AG04449 (cell line): ENCODE measurements at regions of chrX and their contacts with region 1.

Region 1: GRCh38 chrX:24748202-24748843 is 54.6 kb downstream of the POLA1 start:
- DNase-seq: no peak
- H3K4me3 ChIP-seq: no peak overlapping the region
- CTCF ChIP-seq: no peak

Region 2: GRCh38 chrX:24647257-24648058 is 100.9 kb before region 1 on chrX and contains the start of gene PCYT1B:
- CTCF ChIA-PET with region 1: no interaction called
- POLR2A ChIA-PET with region 1: no interaction called
- DNase-seq: no peak
- H3K4me3 ChIP-seq: peak within 1 kb of the TSS; percentile 29
- CTCF ChIP-seq: no peak

Region 3: DNA sequence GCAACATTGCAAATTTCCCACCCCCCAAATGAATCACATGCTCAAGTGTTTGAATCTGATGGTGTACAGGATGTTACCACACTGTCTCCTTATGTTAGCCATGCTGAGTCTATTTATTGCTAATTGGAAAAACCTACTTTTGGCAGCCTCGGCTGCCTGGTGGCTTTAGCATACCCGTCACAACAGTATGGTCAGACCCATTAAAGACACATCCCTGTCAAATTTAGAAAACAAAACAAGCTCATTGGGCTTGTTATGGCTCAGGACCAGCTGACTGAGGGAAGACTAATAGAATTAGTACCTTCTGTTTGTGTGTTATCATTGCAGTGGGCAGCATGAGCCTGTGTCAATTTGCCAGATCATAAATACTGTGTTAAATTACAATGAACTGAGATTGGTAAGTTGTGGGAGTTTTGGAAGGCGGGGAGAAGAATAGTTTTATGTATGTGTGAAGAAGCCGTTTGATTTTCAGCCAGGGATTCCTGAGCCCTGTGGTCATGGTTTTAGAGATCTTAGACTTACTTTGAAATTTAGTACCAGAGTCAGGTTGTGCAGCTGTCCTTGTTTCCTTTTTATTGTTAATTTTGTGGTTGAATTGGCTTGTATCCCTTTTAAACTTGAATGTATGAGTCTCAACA is 12.2 kb after region 1 on chrX:
- CTCF ChIA-PET with region 1: interaction called, 15 read pairs
- POLR2A ChIA-PET with region 1: no interaction called
- DNase-seq: peak; percentile 17
- H3K4me3 ChIP-seq: no peak overlapping the region; the same call in 1 of the 2 replicates
- CTCF ChIP-seq: no peak

Region 4: DNA sequence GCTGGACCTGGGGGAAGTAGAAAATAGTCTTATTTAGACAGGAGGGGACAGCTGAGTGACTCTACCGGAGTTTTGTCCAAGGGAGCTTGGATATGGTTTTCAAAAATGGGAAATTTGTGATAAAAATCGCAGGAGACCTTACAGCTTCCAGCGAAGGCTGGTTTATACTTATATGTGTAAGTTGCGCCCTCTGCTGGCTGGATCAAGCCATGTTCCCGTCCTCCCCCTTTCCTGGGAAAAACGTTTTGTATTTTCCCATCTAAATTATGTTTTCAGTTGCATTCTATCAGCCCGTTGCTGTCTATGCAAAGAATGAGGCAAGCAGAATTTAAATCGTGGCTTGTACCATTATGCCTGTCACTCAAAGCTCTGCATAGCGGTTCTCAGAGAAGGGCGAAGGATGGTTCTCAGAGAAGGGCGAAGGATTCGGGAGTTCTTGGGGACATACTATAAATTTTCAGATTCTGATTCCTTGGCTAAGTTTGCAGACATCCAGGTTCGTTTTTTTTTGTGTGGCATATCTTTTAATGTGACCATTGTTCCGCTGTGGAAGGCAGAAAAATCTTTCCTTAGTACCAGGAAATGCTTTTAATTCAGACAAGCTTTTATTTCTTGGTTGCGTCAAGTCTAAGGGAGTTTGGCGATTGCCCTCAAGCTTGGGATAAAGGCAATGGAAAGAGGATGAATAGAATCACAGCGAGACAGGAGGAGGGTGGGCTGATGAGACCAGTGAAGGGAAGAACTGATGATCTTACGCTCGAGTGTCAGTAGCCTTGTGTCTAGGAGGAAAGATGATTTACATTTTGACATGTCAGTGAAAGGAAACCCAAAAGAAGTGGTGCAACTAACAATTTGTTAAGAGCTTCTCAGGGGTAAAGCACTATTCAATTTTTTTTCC is 396.0 kb after region 1 on chrX:
- CTCF ChIA-PET with region 1: interaction called, 55 read pairs
- POLR2A ChIA-PET with region 1: no interaction called
- DNase-seq: no peak
- H3K4me3 ChIP-seq: peak overlapping the region; percentile 33
- CTCF ChIP-seq: peak; percentile 47